GM12878 (cell line): ENCODE measurements at regions of chr1 and their contacts with region 1.

Region 1: DNA sequence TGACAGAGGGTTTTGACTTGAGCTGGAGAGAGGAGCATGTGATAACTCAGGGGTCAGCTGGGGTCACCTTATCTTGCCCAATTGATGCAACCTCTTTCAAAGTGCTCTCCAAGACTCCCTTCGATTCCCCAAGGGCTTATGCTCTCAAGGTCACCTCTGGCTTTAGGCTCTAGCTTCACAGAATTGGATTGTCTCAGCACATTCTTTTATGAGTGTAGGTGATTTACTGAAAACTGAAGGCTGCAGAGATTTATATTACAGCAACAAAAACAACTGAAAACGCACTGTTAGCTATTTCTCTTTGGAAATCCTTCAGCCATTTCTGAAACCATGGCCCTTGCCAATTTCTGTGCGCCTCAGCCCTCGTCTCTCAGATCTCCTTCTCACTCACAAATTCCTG is 34.5 kb upstream of the MAP1LC3C start:
- DNase-seq: no peak
- ATAC-seq: no peak
- H3K4me3 ChIP-seq: no peak overlapping the region
- H3K27ac ChIP-seq: no peak overlapping the region
- H3K4me1 ChIP-seq: no peaks in the 10 kb centered on the region
- H3K27me3 ChIP-seq: no peaks in the 10 kb centered on the region
- CTCF ChIP-seq: no peak
- EP300 ChIP-seq: no peak
- POLR2A ChIP-seq: no peak
- RAD21 ChIP-seq: no peak

Region 2: GRCh38 chr1:242081446-242081845 is 48.0 kb after region 1 on chr1:
- CTCF ChIA-PET with region 1: no interaction called
- POLR2A ChIA-PET with region 1: no interaction called
- RAD21 ChIA-PET with region 1: no interaction called
- SMC1A ChIA-PET with region 1: no interaction called
- in situ Hi-C with region 1: loop called (anchors 5 kb)
- intact Hi-C with region 1: no loop called
- DNase-seq: no peak
- ATAC-seq: no peak
- H3K4me3 ChIP-seq: no peak overlapping the region
- H3K27ac ChIP-seq: no peak overlapping the region
- H3K4me1 ChIP-seq: no peaks in the 10 kb centered on the region
- H3K27me3 ChIP-seq: no peaks in the 10 kb centered on the region
- CTCF ChIP-seq: no peak
- EP300 ChIP-seq: no peak
- POLR2A ChIP-seq: no peak
- RAD21 ChIP-seq: no peak